Thyroid gland (tissue), 4 donors: ENCODE measurements at regions of chr15 and their contacts with region 1.

Region 1: DNA sequence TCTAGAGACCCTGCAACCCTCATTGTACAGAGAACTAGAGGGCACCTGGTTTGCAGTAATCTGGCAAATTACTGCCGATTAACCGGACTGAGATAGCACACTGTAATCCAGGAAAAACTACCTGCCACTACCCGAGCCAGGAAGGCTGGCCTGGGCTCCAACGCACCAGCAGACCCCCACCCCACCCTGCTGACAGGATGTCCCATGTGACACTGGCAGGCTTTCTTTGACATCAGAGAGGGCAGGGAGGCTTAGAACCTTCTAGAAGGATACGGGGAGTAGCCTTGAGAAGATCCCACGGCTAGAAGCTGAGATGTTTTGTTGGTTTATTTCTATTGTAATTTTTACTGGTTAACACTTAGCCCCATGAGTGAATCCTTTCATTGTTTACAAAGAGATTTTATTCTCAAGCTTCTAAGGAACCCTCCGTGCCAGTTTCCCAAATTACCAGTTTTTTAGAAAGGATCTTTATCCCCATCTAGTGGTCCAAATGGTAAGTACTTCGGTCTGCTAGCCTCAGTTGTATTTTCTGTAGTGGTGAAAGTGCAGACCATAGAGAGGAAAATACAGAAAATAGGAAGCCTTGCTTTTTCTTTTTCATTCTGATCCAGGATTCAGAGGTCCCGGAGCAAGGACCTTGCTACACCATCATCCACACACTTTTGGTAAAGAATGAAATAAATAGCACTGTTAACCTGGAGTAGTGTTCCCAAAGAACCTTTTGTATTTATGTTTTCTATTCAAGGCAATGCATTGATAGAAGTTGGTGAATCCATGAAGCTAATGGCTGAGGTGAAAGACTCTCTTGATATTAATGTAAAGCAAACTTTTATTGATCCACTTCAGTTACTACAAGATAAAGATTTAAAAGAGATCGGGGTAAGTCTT is 81.9 kb upstream of the ADAMTSL3 start:
- DNase-seq: no peak
- H3K4me3 ChIP-seq: no peak overlapping the region
- H3K27ac ChIP-seq: no peak overlapping the region
- H3K4me1 ChIP-seq: no peaks in the 10 kb centered on the region
- H3K27me3 ChIP-seq: no peaks in the 10 kb centered on the region
- CTCF ChIP-seq: peak in 5 of 6 experiments; percentile 27 to 64 (median 45)
- POLR2A ChIP-seq: no peak

Region 2: DNA sequence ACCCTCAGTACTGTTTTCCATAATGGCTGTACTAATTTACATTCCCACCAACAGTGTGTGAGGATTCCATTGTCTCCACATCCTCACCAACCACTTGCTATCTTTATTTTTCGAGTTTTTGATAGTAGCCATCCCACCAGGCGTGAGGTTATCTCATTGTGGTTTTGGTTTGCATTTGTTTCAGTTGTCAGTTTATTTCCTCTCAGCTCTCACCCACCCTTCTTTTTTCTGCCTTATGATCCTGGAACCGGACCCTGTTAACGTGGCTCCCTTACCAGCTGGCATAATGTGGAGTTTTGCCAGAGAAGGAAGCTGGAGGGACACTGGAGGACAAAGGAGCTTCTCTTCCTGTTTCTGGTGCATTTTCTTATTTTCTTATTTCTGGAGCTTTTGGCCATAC is 150.0 kb before region 1 on chr15:
- intact Hi-C with region 1: no loop called
- DNase-seq: no peak
- H3K4me3 ChIP-seq: no peak overlapping the region
- H3K27ac ChIP-seq: no peak overlapping the region
- H3K4me1 ChIP-seq: no peaks in the 10 kb centered on the region
- H3K27me3 ChIP-seq: no peaks in the 10 kb centered on the region
- CTCF ChIP-seq: no peak
- POLR2A ChIP-seq: no peak

Region 3: GRCh38 chr15:83516935-83517334 is 55.1 kb before region 1 on chr15:
- intact Hi-C with region 1: no loop called
- DNase-seq: no peak
- H3K4me3 ChIP-seq: no peak overlapping the region
- H3K27ac ChIP-seq: no peak overlapping the region
- H3K4me1 ChIP-seq: no peaks in the 10 kb centered on the region
- H3K27me3 ChIP-seq: no peaks in the 10 kb centered on the region
- CTCF ChIP-seq: no peak
- POLR2A ChIP-seq: no peak

Region 4: GRCh38 chr15:83685916-83686332 is 113.9 kb after region 1 on chr15:
- intact Hi-C with region 1: no loop called
- DNase-seq: no peak
- H3K4me3 ChIP-seq: no peak overlapping the region
- H3K27ac ChIP-seq: no peak overlapping the region
- H3K4me1 ChIP-seq: no peaks in the 10 kb centered on the region
- H3K27me3 ChIP-seq: no peaks in the 10 kb centered on the region
- CTCF ChIP-seq: no peak
- POLR2A ChIP-seq: no peak

Region 5: GRCh38 chr15:83848315-83849050 is 276.4 kb after region 1 on chr15:
- intact Hi-C with region 1: loop called (anchors 10 kb)
- DNase-seq: no peak
- H3K4me3 ChIP-seq: no peak overlapping the region
- H3K27ac ChIP-seq: no peak overlapping the region
- H3K4me1 ChIP-seq: no peaks in the 10 kb centered on the region
- H3K27me3 ChIP-seq: no peaks in the 10 kb centered on the region
- CTCF ChIP-seq: no peak
- POLR2A ChIP-seq: no peak